Prostate gland (tissue), 2 donors: ENCODE measurements at regions of chr4 and their contacts with region 1.

Region 1: GRCh38 chr4:10403633-10404445 is 53.4 kb downstream of the ZNF518B start:
- DNase-seq: peak; percentile 16
- H3K4me3 ChIP-seq: no peak overlapping the region
- H3K27ac ChIP-seq: no peak overlapping the region
- H3K4me1 ChIP-seq: no peaks in the 10 kb centered on the region
- H3K27me3 ChIP-seq: no peaks in the 10 kb centered on the region
- CTCF ChIP-seq: peak; percentile 40 to 74 (median 61)
- POLR2A ChIP-seq: no peak

Region 2: GRCh38 chr4:9762823-9763475 is 640.9 kb before region 1 on chr4:
- intact Hi-C with region 1: loop called (anchors 5 kb)
- DNase-seq: peak; percentile 67
- H3K4me3 ChIP-seq: no peak overlapping the region
- H3K27ac ChIP-seq: no peak overlapping the region
- H3K4me1 ChIP-seq: no peaks in the 10 kb centered on the region
- H3K27me3 ChIP-seq: no peaks in the 10 kb centered on the region
- CTCF ChIP-seq: peak; percentile 20 to 81 (median 70)
- POLR2A ChIP-seq: no peak

Region 3: GRCh38 chr4:10018818-10019461 is 384.9 kb before region 1 on chr4:
- intact Hi-C with region 1: loop called (anchors 10 kb)
- DNase-seq: peak; percentile 94
- H3K4me3 ChIP-seq: peak overlapping the region; percentile 23 to 41
- H3K27ac ChIP-seq: peak overlapping the region; percentile 85 to 86
- H3K4me1 ChIP-seq: peaks cover 7% of the 10 kb centered on the region
- H3K27me3 ChIP-seq: no peaks in the 10 kb centered on the region
- CTCF ChIP-seq: peak; percentile 99 to 100 (median 99)
- POLR2A ChIP-seq: peak; percentile 49

Region 4: DNA sequence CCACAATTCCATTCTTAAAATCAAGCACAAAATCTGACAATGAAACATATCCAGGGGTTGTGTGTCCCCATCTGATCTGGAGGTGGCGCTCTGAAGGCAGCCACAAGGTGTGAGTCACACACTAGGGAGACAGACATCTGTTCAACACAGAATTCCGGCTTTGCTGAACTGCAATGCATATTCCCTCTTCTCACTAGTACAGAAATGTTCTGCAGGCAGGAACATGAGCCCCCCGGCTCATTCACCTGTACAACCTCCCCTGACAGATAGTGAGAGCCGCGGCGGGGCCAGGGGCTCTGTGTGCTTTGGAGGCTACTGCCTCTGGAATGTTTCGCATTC is 329.1 kb before region 1 on chr4:
- intact Hi-C with region 1: loop called (anchors 5 kb)
- DNase-seq: no peak
- H3K4me3 ChIP-seq: no peak overlapping the region
- H3K27ac ChIP-seq: no peak overlapping the region
- H3K4me1 ChIP-seq: no peaks in the 10 kb centered on the region
- H3K27me3 ChIP-seq: no peaks in the 10 kb centered on the region
- CTCF ChIP-seq: peak in 1 of 4 experiments; percentile 14
- POLR2A ChIP-seq: no peak

Region 5: DNA sequence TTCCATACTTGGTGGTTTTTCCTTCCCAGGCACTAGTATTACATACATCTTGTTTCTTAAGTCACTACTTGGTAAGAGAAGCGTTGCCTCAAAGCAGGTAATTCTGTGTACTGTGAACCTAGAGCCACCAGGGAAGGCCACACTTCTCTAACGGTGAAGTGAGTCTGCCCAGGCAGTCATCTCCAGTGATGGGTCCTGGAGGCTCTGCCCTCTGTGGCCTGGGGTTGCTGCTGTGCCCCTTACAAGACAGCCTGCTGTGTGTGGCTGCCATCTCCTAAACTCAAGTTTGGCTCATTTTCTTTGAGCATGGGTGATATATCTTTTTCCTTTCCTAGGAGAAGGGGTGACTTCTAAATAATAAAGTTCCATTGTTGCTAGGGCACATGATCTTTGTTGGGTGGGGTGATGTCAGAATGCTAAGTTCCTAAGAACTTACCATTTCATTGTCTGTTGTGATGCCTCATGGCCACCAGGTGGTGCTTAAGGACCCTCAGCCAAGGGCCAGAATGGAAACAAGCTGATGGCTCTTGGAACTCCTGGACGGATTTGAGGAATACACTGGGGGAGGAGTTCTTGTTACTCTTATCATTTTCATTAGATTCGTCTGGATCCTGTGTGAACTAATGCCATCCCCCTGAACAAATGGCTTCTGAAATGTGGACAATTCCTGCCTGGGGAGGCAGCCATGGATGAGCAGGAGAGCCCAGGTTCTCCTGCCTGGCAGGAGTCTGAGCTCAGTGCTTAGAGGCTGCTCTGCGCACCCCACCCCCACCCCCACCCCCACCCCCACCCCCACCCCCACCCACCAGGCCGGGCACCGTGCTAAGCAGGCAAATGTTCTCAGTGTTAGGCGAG is 246.1 kb before region 1 on chr4:
- intact Hi-C with region 1: loop called (anchors 2 kb)
- DNase-seq: peak; percentile 64
- H3K4me3 ChIP-seq: no peak overlapping the region
- H3K27ac ChIP-seq: peak overlapping the region in 1 of 2 donors; percentile 24
- H3K4me1 ChIP-seq: no peaks in the 10 kb centered on the region
- H3K27me3 ChIP-seq: no peaks in the 10 kb centered on the region
- CTCF ChIP-seq: peak; percentile 38 to 89 (median 82)
- POLR2A ChIP-seq: no peak

Region 6: DNA sequence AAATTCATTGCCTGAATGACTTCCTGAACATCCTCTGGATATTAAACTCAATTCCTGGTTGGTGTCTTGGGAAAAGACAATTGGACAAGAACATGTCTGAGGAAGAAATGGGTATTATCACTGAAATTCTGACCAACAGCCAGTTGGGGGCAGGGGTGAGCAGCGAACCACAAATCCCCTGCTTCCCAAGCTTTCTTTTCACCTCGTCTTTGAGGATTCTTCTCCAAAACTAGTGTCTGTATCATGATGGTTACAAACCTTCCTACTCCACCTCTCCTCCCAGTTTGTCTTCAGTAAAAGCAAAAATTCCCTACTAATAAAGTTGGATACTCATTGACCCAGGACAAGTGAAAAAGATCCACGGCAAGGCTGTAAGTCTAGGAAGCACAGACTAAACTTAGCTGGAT is 239.0 kb before region 1 on chr4:
- intact Hi-C with region 1: loop called (anchors 2 kb)
- DNase-seq: peak; percentile 16
- H3K4me3 ChIP-seq: no peak overlapping the region
- H3K27ac ChIP-seq: no peak overlapping the region
- H3K4me1 ChIP-seq: no peaks in the 10 kb centered on the region
- H3K27me3 ChIP-seq: no peaks in the 10 kb centered on the region
- CTCF ChIP-seq: peak in 3 of 4 experiments; percentile 33 to 69 (median 57)
- POLR2A ChIP-seq: no peak